Sciatic nerve (tissue), 2 donors: ENCODE measurements at regions of chr10 and their contacts with region 1.

Region 1: DNA sequence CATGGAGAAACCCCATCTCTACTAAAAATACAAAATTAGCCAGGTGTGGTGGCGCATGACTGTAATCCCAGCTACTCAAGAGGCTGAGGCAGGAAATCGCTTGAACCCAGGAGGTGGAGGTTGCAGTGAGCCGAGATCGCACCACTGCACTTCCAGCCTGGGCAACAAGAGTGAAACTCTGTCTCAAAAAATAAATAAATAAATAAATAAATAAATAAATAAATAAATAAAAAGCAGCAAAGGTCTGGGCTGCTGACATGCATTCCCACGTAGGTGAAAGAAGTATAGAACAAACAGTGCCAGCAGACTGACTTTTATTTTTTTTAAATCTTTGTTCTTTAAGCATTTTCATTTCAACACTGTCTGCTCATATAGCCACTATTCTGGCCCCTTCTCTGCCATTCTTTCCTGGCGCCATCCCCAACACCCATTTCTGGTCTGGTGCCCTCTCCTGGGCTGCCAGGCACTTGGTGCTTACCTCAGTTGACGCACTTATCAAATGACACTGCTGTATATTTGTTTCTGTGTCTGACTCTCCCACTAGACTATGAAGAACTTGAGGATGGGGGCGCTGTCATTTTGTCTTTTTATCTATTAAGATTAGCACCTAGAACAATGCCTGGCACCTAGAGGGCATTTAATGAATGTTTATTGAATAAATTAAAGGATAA is 15.6 kb downstream of the FAM107B start:
- DNase-seq: no peak
- ATAC-seq: no peak

Region 2: GRCh38 chr10:12869427-12869826 is 1889.7 kb before region 1 on chr10:
- intact Hi-C with region 1: loop called (anchors 5 kb)
- DNase-seq: no peak
- ATAC-seq: no peak